ENCODE measurements at regions of chr17 and their contacts with region 1.

Region 1: DNA sequence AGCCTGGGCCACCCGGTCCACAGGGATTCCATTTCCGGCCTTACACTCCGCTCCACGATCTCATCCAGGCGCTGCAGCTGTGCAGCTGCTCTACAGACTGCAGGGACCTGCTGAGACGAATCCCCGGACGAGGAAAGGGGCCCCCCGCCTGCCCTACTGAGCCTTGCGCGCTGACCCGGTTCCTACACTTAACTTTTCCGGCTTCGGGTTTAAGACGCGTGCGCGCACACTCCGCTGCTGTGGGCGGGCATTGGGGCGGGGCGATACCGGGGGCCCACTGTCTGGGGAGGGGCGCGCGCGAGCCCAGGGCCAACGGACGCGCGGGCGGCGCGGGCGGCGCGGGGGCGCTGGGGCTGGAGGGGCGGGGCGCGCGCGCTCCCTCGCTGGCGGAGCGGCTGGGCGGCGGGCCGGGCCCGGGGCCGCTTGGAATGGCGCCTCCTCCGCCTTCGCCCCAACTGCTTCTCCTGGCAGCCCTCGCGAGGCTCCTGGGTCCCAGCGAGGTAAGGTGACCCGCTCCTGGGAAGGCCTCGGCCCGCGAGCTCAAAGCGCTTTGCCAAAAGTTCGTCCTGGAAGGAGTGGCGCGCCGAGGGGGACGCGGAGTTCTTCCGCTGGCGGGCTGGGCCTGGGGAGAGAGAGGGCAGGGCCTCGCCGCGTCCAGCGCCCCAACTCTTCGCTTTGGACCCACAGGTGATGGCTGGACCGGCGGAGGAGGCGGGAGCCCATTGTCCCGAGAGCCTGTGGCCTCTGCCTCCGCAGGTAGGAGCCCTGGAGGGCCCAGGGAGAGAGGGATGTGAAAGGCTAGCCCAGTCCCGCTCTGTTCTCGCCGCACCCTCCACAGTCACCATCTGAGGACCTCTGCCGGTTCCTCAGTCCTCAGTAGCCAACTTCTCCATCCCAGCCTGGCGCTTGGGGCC is at the start of gene TP53I13:
- DNase-seq: no peak
- H3K4me3 ChIP-seq: peak within 1 kb of the TSS; percentile 76
- H3K27ac ChIP-seq: peak within 1 kb of the TSS; percentile 61
- H3K27me3 ChIP-seq: no peaks in the 10 kb centered on the region
- CTCF ChIP-seq: no peak
- polyA plus RNA-seq, gene TP53I13: 17.8 and 26.1 TPM in 2 replicates

Region 2: GRCh38 chr17:29376667-29377270 is 191.8 kb before region 1 on chr17:
- CTCF ChIA-PET with region 1: interaction called, 77 read pairs
- POLR2A ChIA-PET with region 1: no interaction called
- DNase-seq: peak; percentile 67
- H3K4me3 ChIP-seq: peak overlapping the region; percentile 25; the same call in 1 of the 2 replicates
- H3K27ac ChIP-seq: peak overlapping the region; percentile 78
- H3K27me3 ChIP-seq: no peaks in the 10 kb centered on the region
- CTCF ChIP-seq: no peak